GM10248 (cell line): ENCODE measurements at regions of chr5 and their contacts with region 1.

Region 1: GRCh38 chr5:10590226-10590999 is 26.5 kb downstream of the ANKRD33B start:
- DNase-seq: no peak
- CTCF ChIP-seq: no peak

Region 2: GRCh38 chr5:10577371-10578292 is 12.8 kb before region 1 on chr5:
- CTCF ChIA-PET with region 1: interaction called, 18 read pairs
- POLR2A ChIA-PET with region 1: interaction called, 4 read pairs
- DNase-seq: no peak
- CTCF ChIP-seq: no peak

Region 3: GRCh38 chr5:10601246-10602030 is 11.0 kb after region 1 on chr5:
- CTCF ChIA-PET with region 1: interaction called, 22 read pairs
- POLR2A ChIA-PET with region 1: interaction called, 3 read pairs
- DNase-seq: no peak
- CTCF ChIP-seq: no peak

Region 4: GRCh38 chr5:11182441-11183268 is 592.2 kb after region 1 on chr5:
- CTCF ChIA-PET with region 1: no interaction called
- POLR2A ChIA-PET with region 1: no interaction called
- DNase-seq: peak; percentile 31
- CTCF ChIP-seq: peak; percentile 41